ENCODE measurements at regions of chr18 and their contacts with region 1.

Region 1: DNA sequence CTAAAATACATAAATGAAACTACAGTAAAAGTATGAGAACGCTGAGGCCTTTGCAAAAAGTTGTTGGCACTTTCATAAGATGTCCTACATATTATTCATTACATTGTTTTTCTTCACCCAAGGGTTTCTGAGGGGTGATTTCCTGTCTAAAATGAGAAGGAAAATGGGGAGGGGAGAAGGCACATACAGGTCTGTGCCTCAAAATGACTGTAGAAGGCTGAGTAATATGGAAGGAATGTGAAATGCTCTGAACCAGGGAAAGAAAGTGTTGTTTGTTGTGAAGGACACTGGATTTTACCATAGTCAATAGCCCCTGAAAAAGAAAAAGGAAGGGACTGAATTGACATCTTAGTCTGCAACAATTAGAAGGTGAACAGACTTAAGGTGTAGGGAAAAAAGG is 99.5 kb upstream of the RNF152 start:
- DNase-seq: peak; percentile 95
- H3K4me3 ChIP-seq: peak overlapping the region in 1 of 3 experiments; percentile 13
- H3K27ac ChIP-seq: peak overlapping the region; percentile 98
- H3K4me1 ChIP-seq: peaks cover 58% of the 10 kb centered on the region
- H3K27me3 ChIP-seq: no peaks in the 10 kb centered on the region
- CTCF ChIP-seq: no peak
- POLR2A ChIP-seq: peak; percentile 33

Region 2: GRCh38 chr18:61702007-61702406 is 290.3 kb before region 1 on chr18:
- CTCF ChIA-PET with region 1: no interaction called
- POLR2A ChIA-PET with region 1: no interaction called
- dilution Hi-C with region 1: no loop called
- intact Hi-C with region 1: loop called (anchors 10 kb)
- DNase-seq: peak; percentile 85
- H3K4me3 ChIP-seq: no peak overlapping the region
- H3K27ac ChIP-seq: peak overlapping the region; percentile 78
- H3K4me1 ChIP-seq: peaks cover 24% of the 10 kb centered on the region
- H3K27me3 ChIP-seq: no peaks in the 10 kb centered on the region
- CTCF ChIP-seq: no peak
- POLR2A ChIP-seq: no peak

Region 3: GRCh38 chr18:61727241-61728193 is 264.8 kb before region 1 on chr18:
- CTCF ChIA-PET with region 1: no interaction called
- POLR2A ChIA-PET with region 1: no interaction called
- dilution Hi-C with region 1: no loop called
- intact Hi-C with region 1: no loop called
- DNase-seq: peak; percentile 67
- H3K4me3 ChIP-seq: no peak overlapping the region
- H3K27ac ChIP-seq: no peak overlapping the region
- H3K4me1 ChIP-seq: peaks cover 6% of the 10 kb centered on the region
- H3K27me3 ChIP-seq: no peaks in the 10 kb centered on the region
- CTCF ChIP-seq: no peak
- POLR2A ChIP-seq: no peak

Region 4: GRCh38 chr18:61738488-61738887 is 253.8 kb before region 1 on chr18:
- CTCF ChIA-PET with region 1: no interaction called
- POLR2A ChIA-PET with region 1: no interaction called
- dilution Hi-C with region 1: no loop called
- intact Hi-C with region 1: no loop called
- DNase-seq: peak; percentile 58
- H3K4me3 ChIP-seq: no peak overlapping the region
- H3K27ac ChIP-seq: peak overlapping the region; percentile 49
- H3K4me1 ChIP-seq: peaks cover 11% of the 10 kb centered on the region
- H3K27me3 ChIP-seq: no peaks in the 10 kb centered on the region
- CTCF ChIP-seq: no peak
- POLR2A ChIP-seq: no peak

Region 5: GRCh38 chr18:61955644-61956043 is 36.6 kb before region 1 on chr18:
- CTCF ChIA-PET with region 1: interaction called, 4 read pairs
- POLR2A ChIA-PET with region 1: no interaction called
- dilution Hi-C with region 1: no loop called
- intact Hi-C with region 1: loop called (anchors 1 kb)
- DNase-seq: peak; percentile 56
- H3K4me3 ChIP-seq: no peak overlapping the region
- H3K27ac ChIP-seq: no peak overlapping the region
- H3K4me1 ChIP-seq: peaks cover 16% of the 10 kb centered on the region
- H3K27me3 ChIP-seq: no peaks in the 10 kb centered on the region
- CTCF ChIP-seq: no peak
- POLR2A ChIP-seq: no peak

Region 6: DNA sequence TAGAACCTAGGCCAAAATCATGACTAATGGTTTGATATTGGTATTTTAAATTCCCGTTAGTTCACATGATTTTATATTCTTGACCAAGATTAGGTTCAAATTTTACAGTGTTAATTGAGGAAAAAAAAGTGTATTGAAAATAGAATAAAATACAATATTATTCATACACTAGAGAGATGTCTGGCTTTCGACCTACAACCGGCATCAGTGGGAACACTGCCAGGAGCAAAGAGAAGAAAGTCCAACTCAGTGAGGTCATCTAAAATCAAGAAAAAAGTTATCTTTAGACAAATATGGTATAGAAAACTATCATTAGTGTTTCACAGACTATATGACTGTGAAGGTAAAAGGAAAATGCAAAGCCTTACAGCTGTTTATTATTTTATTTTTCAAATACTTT is 113.1 kb after region 1 on chr18:
- CTCF ChIA-PET with region 1: no interaction called
- POLR2A ChIA-PET with region 1: no interaction called
- dilution Hi-C with region 1: no loop called
- intact Hi-C with region 1: loop called (anchors 1 kb)
- DNase-seq: peak; percentile 64
- H3K4me3 ChIP-seq: no peak overlapping the region
- H3K27ac ChIP-seq: no peak overlapping the region
- H3K4me1 ChIP-seq: peaks cover 25% of the 10 kb centered on the region
- H3K27me3 ChIP-seq: no peaks in the 10 kb centered on the region
- CTCF ChIP-seq: no peak
- POLR2A ChIP-seq: no peak

Measured in endothelial cell of umbilical vein (primary cell).